ENCODE measurements at regions of chr4 and their contacts with region 1.

Region 1: DNA sequence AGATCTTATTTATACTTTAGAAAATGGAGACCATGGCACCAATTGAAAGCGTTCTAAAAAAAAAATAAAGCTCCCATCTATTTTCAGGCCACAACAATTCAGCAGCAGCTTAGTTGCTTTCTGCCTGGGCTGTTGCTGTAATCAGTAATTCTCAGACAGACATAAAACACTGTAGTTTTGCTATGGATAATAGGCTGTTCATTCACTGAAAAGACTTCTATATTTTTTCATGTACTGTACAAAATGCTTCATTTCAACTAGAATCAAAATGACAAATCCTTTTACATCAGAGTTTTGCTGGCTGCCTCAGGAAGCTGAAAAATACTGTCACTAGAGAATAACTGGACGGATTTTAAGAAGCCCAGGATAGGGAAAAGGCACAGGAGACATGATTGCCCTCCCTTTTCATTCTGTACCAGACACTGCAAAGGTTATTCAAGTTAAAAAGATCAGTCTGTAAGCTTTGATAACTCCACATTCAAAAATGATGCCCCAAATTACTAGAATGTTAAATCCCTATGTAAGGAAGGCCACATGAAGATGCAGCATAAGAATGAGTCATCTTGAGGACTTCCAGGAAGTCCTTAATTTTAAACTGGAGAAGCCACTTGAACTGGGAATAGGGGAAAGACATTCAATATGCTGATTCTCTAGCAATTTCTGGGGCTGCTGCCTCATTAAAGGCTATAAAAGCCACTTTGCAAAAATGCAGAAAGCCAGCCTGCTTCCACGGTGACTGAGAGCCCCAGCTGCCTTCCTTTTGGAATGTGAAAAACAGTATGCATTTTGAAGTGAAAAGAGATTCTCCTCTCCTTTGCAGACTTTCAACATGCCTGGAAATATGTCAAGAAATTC is 403.2 kb upstream of the RASGEF1B start:
- DNase-seq: no peak
- H3K4me3 ChIP-seq: no peak overlapping the region
- H3K27ac ChIP-seq: no peak overlapping the region
- H3K4me1 ChIP-seq: no peaks in the 10 kb centered on the region
- H3K27me3 ChIP-seq: no peaks in the 10 kb centered on the region
- CTCF ChIP-seq: no peak
- EP300 ChIP-seq: no peak
- POLR2A ChIP-seq: no peak

Region 2: GRCh38 chr4:81884986-81885385 is 10.1 kb after region 1 on chr4:
- intact Hi-C with region 1: loop called in 1 of 4 experiments (anchors 2 kb)
- DNase-seq: no peak
- H3K4me3 ChIP-seq: no peak overlapping the region
- H3K27ac ChIP-seq: no peak overlapping the region
- H3K4me1 ChIP-seq: no peaks in the 10 kb centered on the region
- H3K27me3 ChIP-seq: no peaks in the 10 kb centered on the region
- CTCF ChIP-seq: no peak
- EP300 ChIP-seq: no peak
- POLR2A ChIP-seq: no peak